ENCODE measurements at regions of chr10 and their contacts with region 1.

Region 1: GRCh38 chr10:46030091-46030937 is at the start of gene NCOA4:
- DNase-seq: peak; percentile 99
- H3K4me3 ChIP-seq: peak within 1 kb of the TSS; percentile 95
- H3K4me3 Mint-ChIP-seq: peak within 1 kb of the TSS; percentile 100
- H3K27ac Mint-ChIP-seq: peak within 1 kb of the TSS; percentile 98
- H3K4me1 ChIP-seq: peaks cover 49% of the 10 kb centered on the region
- H3K4me1 Mint-ChIP-seq: peaks cover 45% of the 10 kb centered on the region
- H3K27me3 ChIP-seq: no peaks in the 10 kb centered on the region
- H3K27me3 Mint-ChIP-seq: no peaks in the 10 kb centered on the region
- CTCF ChIP-seq: peak; percentile 87 to 98
- total RNA-seq, gene NCOA4: 139 and 142 TPM in 2 replicates

Region 2: DNA sequence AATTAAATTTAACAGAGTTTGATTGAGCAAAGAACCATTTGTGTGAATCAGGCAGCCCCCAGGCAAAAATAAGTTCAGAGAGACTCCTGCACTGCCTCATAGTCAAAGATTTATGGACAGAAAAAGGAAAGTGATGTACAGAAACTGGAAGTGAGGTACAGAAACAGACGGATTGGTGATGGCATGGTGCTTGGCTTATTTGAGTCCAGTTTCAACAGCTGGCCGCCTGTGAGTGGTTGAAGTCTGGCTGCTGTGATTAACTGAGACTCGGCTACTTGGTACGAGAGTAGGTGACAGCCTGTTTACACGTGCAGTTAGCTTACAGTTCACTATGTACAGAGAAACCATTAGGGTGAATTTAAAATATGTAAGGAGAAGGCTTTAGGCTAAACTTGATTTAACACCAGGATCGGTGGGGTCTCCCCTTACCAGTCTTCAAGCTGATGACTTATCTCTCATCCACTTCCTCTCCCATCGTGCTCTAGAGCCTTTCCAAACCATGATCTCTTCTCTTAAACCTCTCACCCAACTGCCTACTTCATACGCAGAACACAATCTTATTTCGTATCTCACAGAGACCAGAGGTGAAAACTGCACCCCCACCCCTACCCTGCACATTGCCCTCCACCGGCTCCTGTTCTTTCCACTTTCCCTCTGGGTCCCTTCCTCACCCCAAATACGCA is 20.8 kb after region 1 on chr10:
- CTCF ChIA-PET with region 1: interaction called, 16 read pairs
- POLR2A ChIA-PET with region 1: interaction called, 5 read pairs
- intact Hi-C with region 1: loop called (anchors 1 kb)
- DNase-seq: no peak
- H3K4me3 ChIP-seq: no peak overlapping the region
- H3K4me3 Mint-ChIP-seq: no peak overlapping the region
- H3K27ac Mint-ChIP-seq: no peak overlapping the region
- H3K4me1 ChIP-seq: peaks cover 50% of the 10 kb centered on the region
- H3K4me1 Mint-ChIP-seq: peaks cover 43% of the 10 kb centered on the region
- H3K27me3 ChIP-seq: no peaks in the 10 kb centered on the region
- H3K27me3 Mint-ChIP-seq: no peaks in the 10 kb centered on the region
- CTCF ChIP-seq: no peak

Region 3: DNA sequence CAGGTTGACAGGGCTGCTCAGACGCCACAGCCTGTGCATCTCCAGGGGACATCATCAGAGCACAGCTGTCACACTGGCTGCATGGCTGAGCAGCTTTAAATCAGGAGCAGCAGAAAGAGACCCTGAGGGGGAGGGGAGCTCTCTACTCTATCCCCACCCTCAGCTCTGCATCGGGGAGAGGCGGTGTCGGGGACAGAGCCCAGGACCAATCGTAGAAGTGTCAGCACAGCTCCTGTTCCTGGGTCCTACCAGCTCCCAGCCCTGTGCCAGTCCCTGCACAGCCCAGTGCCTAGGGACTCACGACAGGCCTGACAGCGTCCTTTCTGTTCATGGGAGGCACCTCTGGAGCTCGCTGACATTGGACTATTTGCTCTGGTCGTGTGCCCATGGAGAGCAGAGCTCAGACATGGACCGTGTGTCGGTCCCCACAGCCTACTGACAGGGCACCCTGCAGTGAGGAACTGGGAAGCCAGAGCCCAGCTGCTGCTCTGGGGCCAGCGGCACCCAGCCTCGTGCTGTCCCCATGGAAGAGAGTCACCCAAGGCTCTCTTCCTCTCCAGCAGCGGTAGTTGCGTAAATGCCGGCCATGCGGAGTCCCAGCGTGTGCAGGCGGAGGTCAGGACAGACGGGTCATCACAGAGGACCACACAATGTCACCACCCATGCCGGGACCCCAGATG is 236.1 kb after region 1 on chr10:
- CTCF ChIA-PET with region 1: no interaction called
- POLR2A ChIA-PET with region 1: no interaction called
- intact Hi-C with region 1: no loop called
- DNase-seq: no peak
- H3K4me3 ChIP-seq: no peak overlapping the region
- H3K4me3 Mint-ChIP-seq: no peak overlapping the region
- H3K27ac Mint-ChIP-seq: no peak overlapping the region
- H3K4me1 ChIP-seq: no peaks in the 10 kb centered on the region
- H3K4me1 Mint-ChIP-seq: no peaks in the 10 kb centered on the region
- H3K27me3 ChIP-seq: no peaks in the 10 kb centered on the region
- H3K27me3 Mint-ChIP-seq: no peaks in the 10 kb centered on the region
- CTCF ChIP-seq: no peak